A673 (cell line): ENCODE measurements at regions of chr14 and their contacts with region 1.

Region 1: DNA sequence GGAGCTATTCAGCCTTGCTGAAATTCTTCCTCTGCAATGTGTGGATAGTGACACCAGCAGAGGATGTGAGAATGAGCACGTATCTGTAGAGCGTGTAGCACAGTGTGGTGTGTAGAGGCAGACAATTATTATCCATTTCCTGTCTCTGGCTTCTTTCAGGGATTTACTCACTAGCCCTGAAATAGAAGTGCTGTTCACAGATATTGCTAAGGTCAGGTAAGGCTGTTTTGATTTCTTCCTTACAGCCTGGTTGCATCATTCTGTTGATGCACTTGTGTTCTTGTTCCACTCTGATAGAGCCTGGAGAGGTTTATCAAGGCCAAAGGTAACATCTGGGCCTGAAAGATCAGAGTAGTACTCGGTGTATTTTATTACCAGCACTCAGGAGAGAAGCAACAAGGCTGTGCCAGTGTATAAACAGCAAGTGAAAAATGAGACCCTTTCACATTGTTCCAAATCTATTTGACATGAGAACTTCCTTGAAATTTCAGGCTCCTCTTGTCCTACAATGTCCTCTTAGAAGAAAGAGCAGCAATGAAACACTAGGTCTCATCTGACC is 16.7 kb downstream of the ARG2 start:
- DNase-seq: peak; percentile 37
- H3K4me3 ChIP-seq: no peak overlapping the region
- H3K27ac ChIP-seq: peak overlapping the region; percentile 27
- H3K4me1 ChIP-seq: peaks cover 10% of the 10 kb centered on the region
- H3K27me3 ChIP-seq: no peaks in the 10 kb centered on the region
- CTCF ChIP-seq: no peak

Region 2: GRCh38 chr14:67410313-67410712 is 226.1 kb before region 1 on chr14:
- CTCF ChIA-PET with region 1: no interaction called
- POLR2A ChIA-PET with region 1: no interaction called
- intact Hi-C with region 1: no loop called
- DNase-seq: no peak
- H3K4me3 ChIP-seq: no peak overlapping the region
- H3K27ac ChIP-seq: no peak overlapping the region
- H3K4me1 ChIP-seq: no peaks in the 10 kb centered on the region
- H3K27me3 ChIP-seq: no peaks in the 10 kb centered on the region
- CTCF ChIP-seq: no peak

Region 3: GRCh38 chr14:67487937-67488893 is 148.2 kb before region 1 on chr14 and contains the start of gene TMEM229B:
- CTCF ChIA-PET with region 1: no interaction called
- POLR2A ChIA-PET with region 1: no interaction called
- intact Hi-C with region 1: no loop called
- DNase-seq: no peak
- H3K4me3 ChIP-seq: no peak within 1 kb of the TSS
- H3K27ac ChIP-seq: no peak within 1 kb of the TSS
- H3K4me1 ChIP-seq: no peaks in the 10 kb centered on the region
- H3K27me3 ChIP-seq: no peaks in the 10 kb centered on the region
- CTCF ChIP-seq: no peak
- total RNA-seq, gene TMEM229B: 0.28 TPM in 1 of 2 replicates, not detected in the other

Region 4: GRCh38 chr14:67619446-67620216 is 16.8 kb before region 1 on chr14 and contains the start of gene ARG2:
- CTCF ChIA-PET with region 1: no interaction called
- POLR2A ChIA-PET with region 1: interaction called, 11 read pairs
- intact Hi-C with region 1: no loop called
- DNase-seq: peak; percentile 95
- H3K4me3 ChIP-seq: peak within 1 kb of the TSS; percentile 69
- H3K27ac ChIP-seq: peak within 1 kb of the TSS; percentile 30
- H3K4me1 ChIP-seq: peaks cover 31% of the 10 kb centered on the region
- H3K27me3 ChIP-seq: no peaks in the 10 kb centered on the region
- CTCF ChIP-seq: no peak; the same call in 1 of the 2 replicates
- total RNA-seq, gene ARG2: 32.1 and 35.6 TPM in 2 replicates

Region 5: DNA sequence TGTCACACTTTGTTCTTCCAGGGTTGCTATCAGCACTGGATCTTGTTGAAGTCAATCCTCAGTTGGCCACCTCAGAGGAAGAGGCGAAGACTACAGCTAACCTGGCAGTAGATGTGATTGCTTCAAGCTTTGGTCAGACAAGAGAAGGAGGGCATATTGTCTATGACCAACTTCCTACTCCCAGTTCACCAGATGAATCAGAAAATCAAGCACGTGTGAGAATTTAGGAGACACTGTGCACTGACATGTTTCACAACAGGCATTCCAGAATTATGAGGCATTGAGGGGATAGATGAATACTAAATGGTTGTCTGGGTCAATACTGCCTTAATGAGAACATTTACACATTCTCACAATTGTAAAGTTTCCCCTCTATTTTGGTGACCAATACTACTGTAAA is 14.3 kb after region 1 on chr14:
- CTCF ChIA-PET with region 1: no interaction called
- POLR2A ChIA-PET with region 1: no interaction called
- intact Hi-C with region 1: no loop called
- DNase-seq: no peak
- H3K4me3 ChIP-seq: no peak overlapping the region
- H3K27ac ChIP-seq: no peak overlapping the region
- H3K4me1 ChIP-seq: no peaks in the 10 kb centered on the region
- H3K27me3 ChIP-seq: no peaks in the 10 kb centered on the region
- CTCF ChIP-seq: no peak

Region 6: DNA sequence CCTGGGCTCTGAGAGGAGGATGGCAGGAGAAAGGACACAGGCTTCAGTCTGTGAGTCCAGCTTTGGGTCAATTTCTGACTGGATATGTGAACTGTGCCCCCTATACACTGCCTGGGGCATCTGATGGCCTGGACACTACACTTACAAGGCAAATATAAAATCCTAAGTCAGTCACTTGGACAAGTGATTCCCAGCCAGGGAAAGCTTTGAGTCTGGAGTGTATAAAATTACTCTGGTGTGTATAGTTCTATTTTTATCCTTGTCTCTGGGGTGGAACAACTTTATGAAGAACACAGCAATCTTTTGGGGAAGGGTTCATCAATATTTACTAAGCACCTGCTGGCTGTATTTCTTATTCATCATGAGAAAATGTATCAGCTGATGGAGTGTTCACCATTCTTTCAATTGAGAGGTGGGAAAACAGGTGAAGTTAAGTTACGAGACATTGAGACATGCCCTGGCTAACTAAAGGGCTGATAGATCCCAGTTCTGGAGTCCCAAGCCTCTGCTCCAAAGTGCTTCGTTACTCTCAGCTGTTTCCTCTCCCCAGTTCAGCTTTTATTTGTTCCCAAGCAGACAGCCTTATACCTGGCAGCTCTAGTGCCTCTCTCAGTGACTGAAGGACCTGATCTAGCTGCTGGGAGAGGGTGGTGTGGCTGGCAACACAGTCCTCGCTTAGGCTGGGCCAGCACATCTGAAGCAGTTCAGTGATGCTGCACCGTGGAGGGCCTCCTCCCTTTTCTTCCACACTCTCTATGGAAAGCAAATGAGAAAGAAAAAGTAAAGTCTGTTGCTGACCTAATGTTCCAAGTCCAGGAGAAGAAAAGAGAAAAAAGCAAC is 149.1 kb after region 1 on chr14:
- CTCF ChIA-PET with region 1: no interaction called
- POLR2A ChIA-PET with region 1: no interaction called
- intact Hi-C with region 1: no loop called
- DNase-seq: no peak
- H3K4me3 ChIP-seq: no peak overlapping the region
- H3K27ac ChIP-seq: no peak overlapping the region
- H3K4me1 ChIP-seq: no peaks in the 10 kb centered on the region
- H3K27me3 ChIP-seq: no peaks in the 10 kb centered on the region
- CTCF ChIP-seq: no peak